ENCODE measurements at regions of chr14 and their contacts with region 1.

Region 1: DNA sequence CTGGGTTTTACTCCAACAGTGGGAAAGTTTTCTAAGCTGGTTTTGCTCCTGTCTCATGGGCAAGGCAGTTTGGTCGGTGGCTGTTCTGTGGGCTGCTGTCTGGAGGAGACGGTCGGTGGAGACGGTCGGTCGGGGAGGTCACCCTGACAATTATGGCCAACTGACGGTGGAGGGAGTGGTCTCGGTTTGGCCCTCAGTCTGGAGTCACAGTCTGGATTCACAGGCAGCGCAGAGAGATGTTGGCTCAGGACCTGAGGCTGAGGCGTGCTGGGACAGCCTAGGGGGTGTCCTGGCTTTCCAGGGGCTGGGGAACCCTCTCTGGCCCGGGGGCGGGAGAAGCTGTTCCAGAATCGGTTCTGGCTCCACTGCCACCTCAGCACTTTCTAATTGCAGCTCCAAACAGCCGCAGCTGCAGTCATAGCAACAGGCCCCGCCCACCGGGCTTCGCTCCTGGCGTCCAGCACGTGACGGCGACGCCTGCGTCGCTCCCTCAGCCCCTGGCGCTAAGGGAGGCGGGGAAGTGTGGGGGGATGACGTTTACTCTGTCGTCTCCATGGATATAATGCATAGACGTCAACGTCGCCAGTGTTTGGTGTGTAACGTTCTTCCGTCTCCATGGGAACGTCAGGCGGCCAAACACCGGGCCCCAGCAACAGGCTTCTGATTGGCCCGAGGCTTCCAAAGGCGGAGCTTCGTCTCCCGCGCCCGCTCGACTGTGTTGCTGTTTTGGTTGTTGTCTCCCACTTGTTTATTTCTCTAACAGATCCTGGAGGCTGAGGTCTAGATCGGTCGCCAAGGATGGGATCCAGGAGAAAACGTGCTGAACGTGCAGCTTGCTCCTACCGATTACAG is 19.8 kb upstream of the FOS start:
- DNase-seq: peak; percentile 98 to 99
- ATAC-seq: peak; percentile 91 to 97
- H3K4me3 ChIP-seq: peak overlapping the region; percentile 37
- H3K27ac ChIP-seq: peak overlapping the region; percentile 83 to 88
- H3K4me1 ChIP-seq: peaks cover 27% of the 10 kb centered on the region
- CTCF ChIP-seq: no peak
- EP300 ChIP-seq: no peak
- POLR2A ChIP-seq: no peak
- RAD21 ChIP-seq: no peak; a peak in 1 of 5 replicates

Region 2: GRCh38 chr14:75273272-75274049 is 14.6 kb after region 1 on chr14:
- CTCF ChIA-PET with region 1: interaction called, 10 read pairs
- POLR2A ChIA-PET with region 1: interaction called, 16 read pairs
- DNase-seq: no peak
- ATAC-seq: no peak
- H3K4me3 ChIP-seq: no peak overlapping the region
- H3K27ac ChIP-seq: no peak overlapping the region
- H3K4me1 ChIP-seq: peaks cover 5% of the 10 kb centered on the region; the same call in 1 of the 3 replicates
- CTCF ChIP-seq: no peak
- EP300 ChIP-seq: no peak
- POLR2A ChIP-seq: no peak
- RAD21 ChIP-seq: no peak